GM13977 (cell line): ENCODE measurements at regions of chr18 and their contacts with region 1.

Region 1: GRCh38 chr18:58776084-58776483 is 88.6 kb upstream of the ZNF532 start:
- DNase-seq: no peak
- CTCF ChIP-seq: no peak

Region 2: GRCh38 chr18:58223717-58224424 is 552.2 kb before region 1 on chr18:
- in situ Hi-C with region 1: no loop called
- DNase-seq: no peak
- CTCF ChIP-seq: no peak

Region 3: DNA sequence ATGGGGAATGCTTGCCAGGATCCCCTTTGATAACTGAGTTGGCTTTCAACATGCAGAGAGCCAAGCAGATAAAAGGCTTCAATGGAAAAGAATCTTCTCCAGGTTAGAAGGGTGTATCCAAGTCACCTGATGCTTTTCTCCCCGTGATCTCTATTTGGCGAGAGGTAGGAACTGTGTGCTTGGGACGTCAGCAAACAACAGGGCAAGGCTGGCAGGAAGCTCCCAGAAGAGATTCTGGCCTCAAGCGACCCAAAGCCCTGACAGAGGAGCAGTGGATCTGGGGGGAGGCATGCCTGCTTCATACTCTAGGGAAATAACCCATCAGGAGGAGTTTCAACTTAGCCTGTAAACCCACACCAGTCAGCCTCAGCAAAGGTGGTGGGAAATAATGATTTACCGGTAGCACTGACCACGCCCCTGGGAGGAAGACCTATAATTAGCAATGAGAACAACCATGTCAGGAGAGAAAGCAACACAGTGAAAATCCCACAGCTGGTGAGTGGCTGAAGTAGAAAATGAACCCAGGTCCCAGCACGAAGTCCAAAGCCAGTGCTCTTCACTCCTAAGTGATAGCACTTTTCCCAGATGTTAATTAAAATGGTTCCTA is 287.3 kb after region 1 on chr18:
- in situ Hi-C with region 1: loop called (anchors 5 kb)
- DNase-seq: no peak
- CTCF ChIP-seq: no peak